ENCODE measurements at regions of chr12 and their contacts with region 1.

Region 1: GRCh38 chr12:109963743-109964429 is 32.3 kb downstream of the GIT2 start:
- DNase-seq: no peak
- H3K4me3 ChIP-seq: no peak overlapping the region
- H3K27ac ChIP-seq: peak overlapping the region; percentile 73
- H3K4me1 ChIP-seq: peaks cover 43% of the 10 kb centered on the region
- H3K27me3 ChIP-seq: no peaks in the 10 kb centered on the region
- CTCF ChIP-seq: no peak

Region 2: DNA sequence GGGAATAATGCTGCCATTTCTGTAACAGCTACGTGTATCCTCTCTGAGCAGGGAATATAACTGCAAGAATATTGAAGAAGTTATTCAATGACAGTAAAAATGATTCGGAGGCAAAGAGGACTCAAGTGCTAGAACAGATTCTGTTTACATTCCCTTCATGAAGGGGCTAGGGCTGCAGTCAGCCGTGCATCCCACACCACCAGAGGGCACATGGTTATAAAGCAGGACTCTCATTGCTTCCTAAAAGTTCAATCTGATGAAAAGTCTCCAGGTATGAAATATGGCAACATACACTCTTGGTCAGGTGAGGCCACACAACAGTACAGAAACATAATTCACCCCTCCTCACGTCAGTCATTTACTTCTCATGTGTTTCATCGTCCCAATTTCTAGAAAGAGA is 29.9 kb before region 1 on chr12:
- intact Hi-C with region 1: loop called (anchors 2 kb)
- DNase-seq: no peak
- H3K4me3 ChIP-seq: no peak overlapping the region
- H3K27ac ChIP-seq: peak overlapping the region; percentile 74
- H3K4me1 ChIP-seq: peaks cover 35% of the 10 kb centered on the region
- H3K27me3 ChIP-seq: no peaks in the 10 kb centered on the region
- CTCF ChIP-seq: peak; percentile 55

Region 3: GRCh38 chr12:110266980-110267620 is 303.2 kb after region 1 on chr12:
- intact Hi-C with region 1: no loop called
- DNase-seq: no peak
- H3K4me3 ChIP-seq: peak overlapping the region; percentile 32
- H3K27ac ChIP-seq: peak overlapping the region; percentile 69
- H3K4me1 ChIP-seq: peaks cover 71% of the 10 kb centered on the region
- H3K27me3 ChIP-seq: no peaks in the 10 kb centered on the region
- CTCF ChIP-seq: no peak